Ovary (tissue), 10 donors: ENCODE measurements at regions of chr1 and their contacts with region 1.

Region 1: GRCh38 chr1:155050560-155051341 is at the start of gene ADAM15:
- DNase-seq: peak; percentile 73 to 87 (median 84)
- H3K4me3 ChIP-seq: peak within 1 kb of the TSS; percentile 82
- H3K27ac ChIP-seq: peak within 1 kb of the TSS; percentile 33 to 81
- H3K4me1 ChIP-seq: peaks cover 6% of the 10 kb centered on the region
- H3K27me3 ChIP-seq: no peaks in the 10 kb centered on the region
- CTCF ChIP-seq: peak; percentile 40 to 91 (median 78)
- EP300 ChIP-seq: no peak
- POLR2A ChIP-seq: no peak
- total RNA-seq, gene ADAM15: 34.8 to 149 (median 67.8) TPM

Region 2: GRCh38 chr1:154955718-154956543 is 94.8 kb before region 1 on chr1 and contains the start of gene PBXIP1:
- intact Hi-C with region 1: loop called in 1 of 4 experiments (anchors 5 kb)
- DNase-seq: peak; percentile 70 to 87 (median 75)
- H3K4me3 ChIP-seq: peak within 1 kb of the TSS; percentile 57
- H3K27ac ChIP-seq: peak within 1 kb of the TSS; percentile 52 to 78
- H3K4me1 ChIP-seq: peaks cover 41% of the 10 kb centered on the region
- H3K27me3 ChIP-seq: no peaks in the 10 kb centered on the region
- CTCF ChIP-seq: peak in 2 of 3 donors; percentile 9 to 34
- EP300 ChIP-seq: no peak
- POLR2A ChIP-seq: peak; percentile 30
- total RNA-seq, gene PBXIP1: 78.7 to 170 (median 120) TPM

Region 3: DNA sequence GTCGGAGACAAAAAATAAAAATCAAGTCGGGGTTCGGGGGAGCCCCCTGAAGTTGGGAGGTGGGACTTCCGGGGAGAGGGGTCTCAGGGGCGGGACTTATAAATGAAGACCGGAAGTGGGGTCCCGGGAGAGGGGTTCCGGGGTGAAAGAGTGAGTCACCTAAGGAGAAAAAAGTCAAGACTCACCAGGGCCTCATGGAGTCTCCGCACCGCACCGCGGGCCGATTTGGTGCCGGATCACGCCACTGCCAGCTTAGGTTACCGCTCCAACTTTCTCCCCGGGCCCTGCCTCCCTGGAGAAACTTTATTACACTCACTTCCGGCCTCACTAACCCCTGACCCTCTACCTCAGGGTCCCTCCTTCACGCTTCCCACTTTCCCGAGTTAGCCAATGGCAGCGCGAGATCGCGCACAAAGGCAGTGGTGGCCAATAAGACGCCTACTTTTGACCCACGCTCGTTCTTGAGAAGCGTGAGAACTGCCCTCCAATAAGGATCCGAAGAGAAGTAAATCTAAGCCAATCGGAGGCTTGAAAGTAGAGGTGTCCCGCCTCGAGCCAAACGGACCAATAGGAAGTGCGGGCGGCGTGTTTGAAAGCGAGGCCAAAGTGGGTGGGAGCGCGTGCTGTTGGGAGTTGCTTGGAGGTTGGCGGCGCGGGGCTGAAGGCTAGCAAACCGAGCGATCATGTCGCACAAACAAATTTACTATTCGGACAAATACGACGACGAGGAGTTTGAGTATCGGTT is 76.5 kb before region 1 on chr1 and contains the start of gene CKS1B:
- intact Hi-C with region 1: loop called in 1 of 4 experiments (anchors 5 kb)
- DNase-seq: peak; percentile 97 to 98 (median 98)
- H3K4me3 ChIP-seq: peak within 1 kb of the TSS; percentile 77
- H3K27ac ChIP-seq: peak within 1 kb of the TSS; percentile 92 to 98
- H3K4me1 ChIP-seq: peaks cover 11% of the 10 kb centered on the region
- H3K27me3 ChIP-seq: no peaks in the 10 kb centered on the region
- CTCF ChIP-seq: peak in 1 of 3 donors; percentile 31
- EP300 ChIP-seq: no peak
- POLR2A ChIP-seq: peak; percentile 91
- total RNA-seq, gene CKS1B: 12.2 to 29.9 (median 24.8) TPM

Region 4: DNA sequence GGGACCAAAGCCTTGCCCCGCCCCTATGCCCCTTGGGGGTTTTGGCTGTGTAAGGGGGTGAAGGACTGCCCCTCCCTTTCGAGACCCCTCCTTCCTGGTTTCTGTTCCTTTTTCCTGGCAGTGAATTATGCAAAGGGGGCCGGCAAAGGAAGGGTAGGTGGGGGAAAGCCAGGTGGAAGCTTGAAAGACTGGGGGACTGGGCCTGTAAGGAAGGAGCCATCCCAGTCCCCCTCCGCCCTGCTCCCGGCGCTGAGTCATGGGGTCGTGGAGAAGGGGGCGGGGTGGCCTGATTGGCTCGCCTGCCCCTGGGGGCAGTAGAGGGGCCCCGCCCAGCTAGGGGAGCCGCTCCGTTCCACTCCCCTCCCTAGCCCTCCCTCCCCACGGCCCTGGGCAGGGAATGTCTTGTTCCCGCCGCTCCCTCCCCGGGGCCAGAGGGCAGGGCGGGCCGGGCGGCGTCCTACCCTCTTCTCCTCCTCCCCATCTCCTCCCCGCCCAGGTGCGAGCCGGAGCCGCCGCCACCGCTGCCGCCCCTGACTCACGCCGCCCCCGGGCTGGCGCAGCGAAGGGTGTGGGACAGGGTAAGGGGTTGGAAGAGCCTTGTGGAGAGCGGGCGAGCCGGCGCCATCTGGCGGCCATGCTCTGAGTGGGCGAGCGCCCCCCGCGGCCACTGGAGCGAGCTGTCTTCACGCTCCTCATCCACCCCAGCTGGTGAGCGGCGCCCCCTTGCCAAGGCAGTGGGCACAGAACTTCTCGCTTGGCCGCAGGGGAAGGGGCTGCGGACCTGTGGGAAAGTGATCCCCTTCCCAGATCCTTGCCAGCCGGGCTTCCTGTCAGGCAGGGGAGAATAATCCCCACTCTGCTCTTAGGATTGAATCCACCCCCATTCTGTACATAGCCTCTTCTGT is 33.5 kb before region 1 on chr1:
- intact Hi-C with region 1: loop called in 1 of 4 experiments (anchors 5 kb)
- DNase-seq: peak; percentile 89 to 97 (median 95)
- H3K4me3 ChIP-seq: peak overlapping the region; percentile 31
- H3K27ac ChIP-seq: peak overlapping the region; percentile 79 to 81
- H3K4me1 ChIP-seq: peaks cover 6% of the 10 kb centered on the region
- H3K27me3 ChIP-seq: no peaks in the 10 kb centered on the region
- CTCF ChIP-seq: peak; percentile 96 to 100 (median 99)
- EP300 ChIP-seq: peak; percentile 41
- POLR2A ChIP-seq: peak; percentile 62

Region 5: GRCh38 chr1:155091071-155091709 is 40.4 kb after region 1 on chr1:
- intact Hi-C with region 1: no loop called
- DNase-seq: peak; percentile 70 to 87 (median 82)
- H3K4me3 ChIP-seq: no peak overlapping the region
- H3K27ac ChIP-seq: no peak overlapping the region
- H3K4me1 ChIP-seq: peaks cover 8% of the 10 kb centered on the region
- H3K27me3 ChIP-seq: no peaks in the 10 kb centered on the region
- CTCF ChIP-seq: peak; percentile 90 to 93 (median 92)
- EP300 ChIP-seq: no peak
- POLR2A ChIP-seq: no peak

Region 6: DNA sequence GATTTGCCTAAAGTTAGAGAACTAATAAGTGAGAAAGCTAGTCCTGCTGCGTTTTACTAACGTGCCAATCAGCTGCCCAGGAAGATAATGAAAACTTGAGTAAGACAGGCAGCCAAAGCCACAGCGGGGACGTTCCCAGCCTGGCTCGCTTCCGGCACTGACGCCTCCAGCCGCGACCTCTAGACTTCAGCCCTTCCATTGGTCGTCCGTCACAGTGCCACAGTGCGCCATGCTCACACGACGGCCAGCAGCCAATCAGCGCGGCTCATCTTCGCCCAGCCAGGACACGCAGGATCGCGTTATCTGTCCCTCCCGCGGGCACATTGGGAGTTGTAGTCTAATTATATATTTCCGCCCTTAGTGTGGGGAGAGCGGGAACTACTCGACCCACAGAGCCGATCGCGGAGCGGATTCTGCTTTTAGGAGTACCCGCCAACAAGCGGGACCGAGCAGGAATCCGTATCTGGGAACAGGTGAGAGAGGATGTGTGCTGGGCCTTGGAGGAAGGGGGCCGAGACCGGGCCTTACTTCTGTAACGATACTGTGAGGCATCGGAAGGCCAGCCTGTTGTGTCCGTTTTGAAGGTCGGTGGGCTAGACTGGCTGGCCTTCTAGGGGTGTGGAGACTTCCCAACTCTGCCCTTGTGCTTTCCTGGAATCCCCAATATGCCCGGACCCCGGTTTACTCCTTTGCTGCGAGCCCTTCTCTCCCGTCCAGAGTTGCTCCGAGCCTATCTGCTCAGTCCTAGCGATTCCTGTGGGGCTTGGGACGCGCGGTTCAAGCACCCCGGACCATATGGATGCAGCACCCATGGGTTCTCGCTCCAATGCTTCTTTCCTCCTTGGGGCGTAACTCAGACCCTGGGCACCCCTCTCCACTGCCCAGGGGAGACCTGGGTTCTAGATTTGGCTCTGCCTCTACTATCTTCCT is 258.0 kb after region 1 on chr1 and contains the start of gene FDPS:
- intact Hi-C with region 1: no loop called
- DNase-seq: peak; percentile 97 to 98 (median 98)
- H3K4me3 ChIP-seq: peak within 1 kb of the TSS; percentile 80
- H3K27ac ChIP-seq: peak within 1 kb of the TSS; percentile 54 to 84
- H3K4me1 ChIP-seq: peaks cover 5% of the 10 kb centered on the region
- H3K27me3 ChIP-seq: no peaks in the 10 kb centered on the region
- CTCF ChIP-seq: peak in 2 of 3 donors; percentile 47 to 68
- EP300 ChIP-seq: peak; percentile 36
- POLR2A ChIP-seq: peak; percentile 48
- total RNA-seq, gene FDPS: 50.7 to 177 (median 74.9) TPM